PC-9 (cell line): ENCODE measurements at regions of chr20 and their contacts with region 1.

Region 1: DNA sequence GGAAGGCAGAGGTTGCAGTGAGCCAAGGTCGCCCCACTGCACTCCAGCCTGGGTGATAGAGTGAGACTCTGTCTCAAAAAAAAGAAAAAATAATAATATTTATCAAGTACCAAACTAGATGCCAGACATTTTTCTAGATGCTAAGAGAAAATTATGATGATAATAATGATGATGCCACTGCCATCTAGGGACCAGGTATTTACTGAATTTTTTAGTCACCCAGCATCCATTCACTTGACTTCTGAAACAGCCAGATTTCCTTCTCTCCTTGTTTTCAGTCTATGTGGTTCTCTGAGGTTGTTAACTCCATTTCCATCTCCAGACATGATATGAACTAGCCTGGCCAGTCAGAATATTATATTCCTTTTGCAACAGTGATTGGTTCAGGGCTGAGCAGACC is 9.3 kb upstream of the B4GALT5 start:
- DNase-seq: no peak
- H3K4me3 ChIP-seq: no peak overlapping the region
- H3K27ac ChIP-seq: peak overlapping the region; percentile 89; the same call in 1 of the 2 replicates
- H3K4me1 ChIP-seq: peaks cover 60% of the 10 kb centered on the region
- H3K27me3 ChIP-seq: no peaks in the 10 kb centered on the region
- CTCF ChIP-seq: no peak

Region 2: GRCh38 chr20:48725226-48725991 is 997.5 kb before region 1 on chr20:
- CTCF ChIA-PET with region 1: no interaction called
- POLR2A ChIA-PET with region 1: no interaction called
- intact Hi-C with region 1: no loop called
- DNase-seq: peak in 1 of 2 experiments; percentile 56
- H3K4me3 ChIP-seq: no peak overlapping the region
- H3K27ac ChIP-seq: no peak overlapping the region
- H3K4me1 ChIP-seq: peaks cover 6% of the 10 kb centered on the region; the same call in 1 of the 2 replicates
- H3K27me3 ChIP-seq: no peaks in the 10 kb centered on the region
- CTCF ChIP-seq: no peak

Region 3: GRCh38 chr20:49737260-49737659 is 14.3 kb after region 1 on chr20:
- CTCF ChIA-PET with region 1: no interaction called
- POLR2A ChIA-PET with region 1: no interaction called
- intact Hi-C with region 1: loop called (anchors 2 kb)
- DNase-seq: no peak
- H3K4me3 ChIP-seq: no peak overlapping the region
- H3K27ac ChIP-seq: no peak overlapping the region
- H3K4me1 ChIP-seq: peaks cover under 1% of the 10 kb centered on the region; the same call in 1 of the 2 replicates
- H3K27me3 ChIP-seq: no peaks in the 10 kb centered on the region
- CTCF ChIP-seq: no peak